KBM-7 (cell line): ENCODE measurements at regions of chr11 and their contacts with region 1.

Region 1: GRCh38 chr11:131064373-131064991 is 148.2 kb upstream of the SNX19 start:
- DNase-seq: peak; percentile 57

Region 2: DNA sequence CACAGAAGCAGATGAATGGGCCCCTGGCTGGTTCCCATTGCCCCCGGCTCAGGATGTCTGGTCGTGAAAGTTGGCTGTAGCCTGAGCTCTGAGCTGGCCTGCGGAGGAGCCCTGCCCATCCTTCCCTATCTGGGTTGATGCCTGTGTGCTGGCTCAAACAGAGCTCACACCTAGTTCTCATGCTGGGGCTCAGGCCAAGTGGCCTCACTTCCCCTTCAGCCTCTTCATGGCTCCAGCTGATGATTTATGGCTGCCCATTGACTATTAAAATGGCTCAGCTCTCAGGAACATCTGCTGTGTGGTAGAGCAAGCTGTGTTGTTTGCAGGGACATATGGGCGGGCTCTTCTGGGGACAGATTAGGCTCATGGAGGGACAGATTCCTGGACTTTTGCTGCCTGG is 551.4 kb before region 1 on chr11:
- in situ Hi-C with region 1: no loop called
- DNase-seq: no peak

Region 3: DNA sequence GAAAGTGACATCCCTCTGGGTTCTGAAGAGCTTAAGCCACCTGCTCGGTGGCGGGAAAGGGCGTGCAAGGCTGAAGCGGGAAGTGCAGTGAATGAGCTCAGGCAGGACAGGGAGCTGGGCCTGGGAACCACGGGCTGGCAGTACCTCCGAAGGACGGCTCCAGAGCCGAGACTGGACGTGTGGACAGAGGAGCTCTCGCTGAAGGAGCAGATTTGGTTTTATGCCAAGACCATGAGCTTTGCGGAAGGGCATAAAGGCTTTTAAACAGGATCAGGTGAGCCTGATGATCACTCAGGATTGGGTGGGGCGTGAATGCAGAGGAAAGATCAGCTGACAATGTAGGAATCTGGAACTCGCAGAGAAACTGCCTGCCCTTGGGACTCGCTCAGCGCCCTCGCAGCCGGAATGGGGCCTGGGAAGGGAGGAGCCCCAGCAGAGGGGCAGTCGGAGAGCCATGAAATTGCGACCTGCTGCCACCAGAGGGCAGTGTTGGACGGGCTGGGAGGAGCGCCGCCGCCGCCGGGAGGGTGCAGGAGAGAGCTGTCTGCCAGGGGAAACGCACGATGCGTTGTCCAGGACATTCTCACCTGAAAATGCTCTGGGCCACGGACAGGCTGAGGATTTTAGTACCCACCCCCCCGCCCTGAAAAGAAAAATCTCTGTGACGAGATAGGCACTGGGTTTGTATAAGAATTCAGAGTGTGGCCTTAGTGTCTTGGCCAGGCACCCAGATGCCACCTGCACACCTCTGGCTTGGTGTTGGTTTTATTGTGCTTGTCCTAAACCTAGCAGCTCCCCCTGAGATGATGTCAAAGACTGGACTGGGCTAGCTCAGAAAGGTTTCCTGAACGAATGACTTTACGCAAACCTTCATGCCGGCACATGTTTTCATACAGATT is 630.3 kb after region 1 on chr11:
- in situ Hi-C with region 1: loop called (anchors 25 kb)
- DNase-seq: peak; percentile 75